Mammary epithelial cell (primary cell): ENCODE measurements at regions of chr15 and their contacts with region 1.

Region 1: DNA sequence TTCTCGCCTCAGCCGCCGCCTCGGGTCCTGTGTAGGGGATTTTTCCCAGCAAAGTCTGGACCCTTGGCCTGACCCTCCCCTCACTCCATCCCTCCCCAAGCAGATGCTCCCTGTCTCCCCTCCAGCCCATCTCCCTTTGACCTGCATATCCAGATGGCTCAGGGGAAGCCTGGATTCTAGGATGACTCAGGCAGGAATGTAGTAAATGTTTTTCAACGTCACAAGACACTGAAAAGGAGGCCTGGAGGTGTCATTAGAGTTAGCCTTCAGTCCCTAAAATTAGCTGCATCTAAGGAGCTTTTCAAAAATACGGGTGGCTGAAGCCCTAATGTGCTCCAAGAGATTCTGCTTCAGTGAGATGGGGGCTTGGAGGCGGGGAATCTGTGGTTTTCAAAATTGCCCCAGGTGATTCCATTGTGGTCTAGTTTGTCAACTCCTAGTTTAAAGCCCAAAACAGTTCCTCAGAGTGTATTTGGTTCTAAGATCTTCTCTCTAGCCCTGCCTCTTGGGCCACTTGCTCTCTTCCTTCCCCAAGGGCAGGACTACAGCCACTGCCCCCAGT is 7.3 kb downstream of the ACAN start:
- DNase-seq: peak; percentile 44
- H3K4me3 ChIP-seq: no peak overlapping the region
- H3K27ac ChIP-seq: no peak overlapping the region
- H3K4me1 ChIP-seq: no peaks in the 10 kb centered on the region
- H3K27me3 ChIP-seq: no peaks in the 10 kb centered on the region
- CTCF ChIP-seq: no peak

Region 2: GRCh38 chr15:88730751-88731150 is 79.8 kb before region 1 on chr15:
- CTCF ChIA-PET with region 1: no interaction called
- dilution Hi-C with region 1: loop called (anchors 5 kb)
- in situ Hi-C with region 1: no loop called
- intact Hi-C with region 1: no loop called
- DNase-seq: no peak
- H3K4me3 ChIP-seq: no peak overlapping the region
- H3K27ac ChIP-seq: no peak overlapping the region
- H3K4me1 ChIP-seq: no peaks in the 10 kb centered on the region
- H3K27me3 ChIP-seq: no peaks in the 10 kb centered on the region
- CTCF ChIP-seq: no peak

Region 3: DNA sequence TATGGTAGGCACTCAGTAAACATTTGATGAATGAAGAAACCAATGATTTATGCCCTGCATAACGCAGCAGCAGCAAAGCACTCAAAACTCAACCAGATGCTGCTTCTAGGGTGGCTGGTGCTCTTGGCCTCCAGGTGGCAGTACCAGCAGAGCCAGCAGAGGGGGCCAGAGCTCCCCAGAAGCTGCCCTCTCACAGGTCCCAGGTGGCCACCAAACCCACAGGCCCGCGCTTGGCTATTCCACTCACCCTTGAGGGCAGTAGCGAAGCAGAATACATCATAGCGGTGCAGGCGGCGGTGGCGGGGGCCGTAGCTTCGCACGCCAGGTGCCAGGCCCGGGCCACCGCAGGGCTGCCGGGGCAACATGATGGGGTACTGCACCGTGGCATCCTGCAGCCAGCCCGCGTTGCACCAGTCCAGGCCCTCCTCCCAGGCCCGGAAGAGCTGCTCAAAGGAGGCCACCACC is 68.2 kb after region 1 on chr15:
- CTCF ChIA-PET with region 1: no interaction called
- dilution Hi-C with region 1: loop called (anchors 5 kb)
- in situ Hi-C with region 1: no loop called
- intact Hi-C with region 1: no loop called
- DNase-seq: no peak
- H3K4me3 ChIP-seq: no peak overlapping the region
- H3K27ac ChIP-seq: no peak overlapping the region
- H3K4me1 ChIP-seq: peaks cover 3% of the 10 kb centered on the region
- H3K27me3 ChIP-seq: no peaks in the 10 kb centered on the region
- CTCF ChIP-seq: peak; percentile 80 to 92